Activated T-helper 2 cell treated with anti-CD3 and anti-CD28 coated beads, Interferon-gamma antibody, Interleukin-2, Interleukin-4, amounts not matched to agents 10 μg/mL and 5 μg/mL and 100 μg/mL, durations not matched to agents 14 hours and 24 hours and 36 hours (primary cell): ENCODE measurements at regions of chr10 and their contacts with region 1.

Region 1: GRCh38 chr10:62268399-62269114 is at the start of gene RTKN2:
- DNase-seq: peak; percentile 70
- H3K4me3 Mint-ChIP-seq: peak within 1 kb of the TSS; percentile 85
- H3K27ac Mint-ChIP-seq: no peak within 1 kb of the TSS
- H3K4me1 Mint-ChIP-seq: peaks cover 25% of the 10 kb centered on the region
- H3K27me3 Mint-ChIP-seq: peaks cover 36% of the 10 kb centered on the region
- total RNA-seq, gene RTKN2: 2.8 and 2.9 TPM in 2 replicates

Region 2: GRCh38 chr10:62384057-62384446 is 115.5 kb after region 1 on chr10:
- intact Hi-C with region 1: loop called (anchors 5 kb)
- DNase-seq: peak; percentile 55
- H3K4me3 Mint-ChIP-seq: no peak overlapping the region
- H3K27ac Mint-ChIP-seq: peak overlapping the region; percentile 60
- H3K4me1 Mint-ChIP-seq: peaks cover 27% of the 10 kb centered on the region
- H3K27me3 Mint-ChIP-seq: peaks cover 54% of the 10 kb centered on the region

Region 3: DNA sequence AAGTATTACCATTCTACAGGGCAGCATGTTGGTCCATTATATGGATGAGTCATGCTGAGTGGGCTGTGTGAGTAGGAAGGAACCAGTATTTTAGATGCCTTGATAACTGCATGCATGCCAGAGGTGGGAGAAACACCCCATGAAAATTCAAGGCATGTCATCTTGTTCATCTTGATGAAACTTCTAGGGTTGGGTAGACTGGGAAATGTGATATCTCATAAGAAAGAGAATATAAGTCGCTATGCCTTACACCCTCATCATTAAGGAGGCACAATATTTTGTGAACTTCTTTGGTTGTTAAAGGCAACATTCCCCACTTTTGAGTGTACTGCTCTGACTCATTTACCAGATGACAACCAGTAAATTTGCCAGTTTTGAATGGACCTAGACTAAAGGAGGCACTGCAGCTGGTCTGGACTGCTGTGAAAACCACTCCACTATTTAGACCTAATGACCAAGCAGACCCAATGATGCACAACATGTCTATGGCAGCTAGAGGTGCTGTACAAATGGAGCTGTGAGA is 153.6 kb after region 1 on chr10:
- intact Hi-C with region 1: loop called (anchors 5 kb)
- DNase-seq: no peak
- H3K4me3 Mint-ChIP-seq: no peak overlapping the region
- H3K27ac Mint-ChIP-seq: no peak overlapping the region
- H3K4me1 Mint-ChIP-seq: peaks cover 19% of the 10 kb centered on the region
- H3K27me3 Mint-ChIP-seq: peaks cover 8% of the 10 kb centered on the region